ENCODE measurements at regions of chrX and their contacts with region 1.

Region 1: GRCh38 chrX:37825209-37825842 is 22.0 kb downstream of the DYNLT3 start:
- DNase-seq: peak; percentile 30
- H3K4me3 ChIP-seq: no peak overlapping the region
- H3K27ac ChIP-seq: no peak overlapping the region
- H3K4me1 ChIP-seq: no peaks in the 10 kb centered on the region
- H3K27me3 ChIP-seq: no peaks in the 10 kb centered on the region
- CTCF ChIP-seq: peak; percentile 58 to 79 (median 67)
- POLR2A ChIP-seq: no peak

Region 2: DNA sequence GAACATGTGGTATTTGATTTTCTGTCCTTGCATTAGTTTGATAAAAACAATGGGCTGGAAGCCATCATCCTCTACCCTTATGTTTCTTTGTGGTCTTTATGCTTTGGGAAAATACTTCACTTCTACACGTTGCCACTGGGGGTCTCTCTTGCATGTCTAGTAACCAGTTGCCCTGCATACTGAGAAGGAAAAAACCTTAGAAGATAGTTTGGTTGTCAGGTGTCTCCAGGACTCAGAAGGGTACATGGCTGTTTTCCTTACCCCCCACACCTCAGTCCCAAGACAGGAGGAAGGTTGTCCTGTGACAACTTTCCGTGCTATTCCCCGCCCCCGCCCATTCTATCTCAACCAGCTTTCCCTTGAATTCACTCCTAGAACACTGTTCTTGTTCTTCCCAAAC is 316.0 kb before region 1 on chrX:
- intact Hi-C with region 1: loop called (anchors 10 kb)
- DNase-seq: no peak
- H3K4me3 ChIP-seq: no peak overlapping the region
- H3K27ac ChIP-seq: no peak overlapping the region
- H3K4me1 ChIP-seq: no peaks in the 10 kb centered on the region
- H3K27me3 ChIP-seq: no peaks in the 10 kb centered on the region
- CTCF ChIP-seq: peak in 2 of 4 experiments; percentile 26 to 43
- POLR2A ChIP-seq: no peak

Region 3: DNA sequence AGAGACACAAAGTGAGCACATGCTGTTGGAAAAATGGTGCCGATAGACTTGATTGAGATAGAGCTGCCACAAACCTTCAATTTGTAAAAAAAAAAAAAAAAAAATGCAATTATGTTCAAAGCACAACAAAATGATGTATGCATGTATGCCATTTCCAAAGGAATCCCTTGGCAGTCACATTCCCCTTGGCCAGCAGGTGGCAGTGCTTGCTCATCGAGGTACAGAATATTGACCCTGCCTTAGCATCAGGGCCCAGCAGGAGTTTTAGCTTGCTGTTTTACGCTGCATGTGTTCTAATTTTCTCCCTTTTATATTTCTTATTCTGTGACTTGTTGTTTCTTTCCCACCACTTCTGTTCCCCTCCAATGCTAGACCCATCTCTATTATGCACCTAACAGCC is 80.0 kb before region 1 on chrX:
- intact Hi-C with region 1: loop called (anchors 10 kb)
- DNase-seq: peak; percentile 62
- H3K4me3 ChIP-seq: no peak overlapping the region
- H3K27ac ChIP-seq: no peak overlapping the region
- H3K4me1 ChIP-seq: no peaks in the 10 kb centered on the region
- H3K27me3 ChIP-seq: no peaks in the 10 kb centered on the region
- CTCF ChIP-seq: peak; percentile 36 to 71 (median 63)
- POLR2A ChIP-seq: no peak

Region 4: GRCh38 chrX:38018766-38019425 is 193.6 kb after region 1 on chrX:
- intact Hi-C with region 1: no loop called
- DNase-seq: no peak
- H3K4me3 ChIP-seq: no peak overlapping the region
- H3K27ac ChIP-seq: no peak overlapping the region
- H3K4me1 ChIP-seq: no peaks in the 10 kb centered on the region
- H3K27me3 ChIP-seq: no peaks in the 10 kb centered on the region
- CTCF ChIP-seq: no peak
- POLR2A ChIP-seq: no peak

Measured in prostate gland (tissue), 2 donors.